Activated CD8-positive, alpha-beta T cell treated with anti-CD3 and anti-CD28 coated beads for 36 hours (primary cell): ENCODE measurements at regions of chr1 and their contacts with region 1.

Region 1: DNA sequence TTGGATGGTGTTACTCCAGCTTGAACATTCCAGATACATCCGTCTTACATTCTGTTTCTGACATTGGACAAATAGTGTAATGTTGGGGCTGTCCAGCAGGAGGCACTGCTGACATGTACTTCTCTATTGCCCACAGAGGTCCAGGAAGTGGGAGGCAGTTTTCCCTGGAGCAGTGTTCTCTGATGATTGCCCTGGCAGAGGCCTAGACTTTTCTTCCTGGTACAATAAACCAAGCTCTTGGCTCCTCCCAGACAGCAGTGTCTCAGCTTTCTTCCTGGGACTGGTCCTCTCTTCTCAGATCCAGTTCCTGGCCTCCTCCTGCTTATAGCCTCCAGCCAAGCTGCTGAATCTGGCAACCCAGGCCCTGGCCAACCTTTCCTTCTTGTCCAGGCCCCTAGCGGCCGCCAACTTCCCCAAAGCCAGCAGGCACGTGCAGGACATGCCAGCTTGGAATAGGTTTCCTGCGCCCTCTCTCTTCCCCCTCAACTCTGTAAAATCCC is 14.9 kb upstream of the IFNLR1 start:
- DNase-seq: peak; percentile 80
- ATAC-seq: peak; percentile 41
- H3K4me3 Mint-ChIP-seq: no peak overlapping the region
- H3K27ac Mint-ChIP-seq: no peak overlapping the region
- H3K4me1 Mint-ChIP-seq: peaks cover 14% of the 10 kb centered on the region
- H3K27me3 Mint-ChIP-seq: peaks cover 11% of the 10 kb centered on the region
- CTCF ChIP-seq: peak; percentile 97

Region 2: GRCh38 chr1:24150234-24151174 is 51.5 kb before region 1 on chr1:
- CTCF ChIA-PET with region 1: interaction called, 56 read pairs
- POLR2A ChIA-PET with region 1: interaction called, 3 read pairs
- intact Hi-C with region 1: no loop called
- DNase-seq: peak; percentile 95
- ATAC-seq: peak; percentile 97
- H3K4me3 Mint-ChIP-seq: peak overlapping the region; percentile 61
- H3K27ac Mint-ChIP-seq: no peak overlapping the region
- H3K4me1 Mint-ChIP-seq: peaks cover 18% of the 10 kb centered on the region
- H3K27me3 Mint-ChIP-seq: peaks cover 36% of the 10 kb centered on the region
- CTCF ChIP-seq: peak; percentile 95

Region 3: DNA sequence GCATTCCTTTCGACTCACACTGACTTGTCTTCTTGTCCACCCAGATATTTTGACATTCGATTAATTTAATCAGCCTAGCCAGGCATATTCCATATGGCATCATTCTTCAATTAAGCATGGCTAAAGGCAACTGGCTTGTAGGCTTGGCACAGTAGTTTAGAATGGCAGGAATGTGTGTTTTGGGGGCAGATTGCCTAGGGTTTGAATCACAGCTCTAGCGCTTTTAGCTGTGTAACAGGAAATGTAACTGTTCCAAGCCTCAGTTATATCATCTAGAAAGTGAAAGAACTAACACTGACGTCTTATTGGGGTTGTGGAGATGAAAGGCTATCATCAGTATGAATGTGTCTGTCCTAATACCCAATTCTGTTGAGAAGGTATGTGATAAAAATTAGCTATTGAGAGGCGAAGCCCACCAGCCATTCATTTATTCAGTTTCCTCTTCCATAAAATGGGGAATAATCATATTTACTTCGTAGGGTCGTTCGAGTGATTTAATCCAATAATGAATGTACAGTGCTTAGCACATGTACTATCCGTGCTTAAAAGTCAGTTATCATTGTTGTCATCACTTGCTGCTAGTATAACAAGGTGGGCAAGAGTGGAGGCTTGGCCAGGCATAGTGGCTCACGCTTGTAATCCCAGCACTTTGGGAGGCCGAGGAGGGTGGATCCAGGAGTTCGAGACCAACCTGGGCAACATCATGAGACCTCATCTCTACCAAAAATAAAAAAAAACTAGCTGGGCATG is 75.6 kb after region 1 on chr1:
- CTCF ChIA-PET with region 1: interaction called, 14 read pairs
- POLR2A ChIA-PET with region 1: no interaction called
- intact Hi-C with region 1: no loop called
- DNase-seq: peak; percentile 39
- ATAC-seq: peak; percentile 97
- H3K4me3 Mint-ChIP-seq: no peak overlapping the region
- H3K27ac Mint-ChIP-seq: no peak overlapping the region
- H3K4me1 Mint-ChIP-seq: peaks cover 9% of the 10 kb centered on the region
- H3K27me3 Mint-ChIP-seq: peaks cover 26% of the 10 kb centered on the region
- CTCF ChIP-seq: no peak

Region 4: DNA sequence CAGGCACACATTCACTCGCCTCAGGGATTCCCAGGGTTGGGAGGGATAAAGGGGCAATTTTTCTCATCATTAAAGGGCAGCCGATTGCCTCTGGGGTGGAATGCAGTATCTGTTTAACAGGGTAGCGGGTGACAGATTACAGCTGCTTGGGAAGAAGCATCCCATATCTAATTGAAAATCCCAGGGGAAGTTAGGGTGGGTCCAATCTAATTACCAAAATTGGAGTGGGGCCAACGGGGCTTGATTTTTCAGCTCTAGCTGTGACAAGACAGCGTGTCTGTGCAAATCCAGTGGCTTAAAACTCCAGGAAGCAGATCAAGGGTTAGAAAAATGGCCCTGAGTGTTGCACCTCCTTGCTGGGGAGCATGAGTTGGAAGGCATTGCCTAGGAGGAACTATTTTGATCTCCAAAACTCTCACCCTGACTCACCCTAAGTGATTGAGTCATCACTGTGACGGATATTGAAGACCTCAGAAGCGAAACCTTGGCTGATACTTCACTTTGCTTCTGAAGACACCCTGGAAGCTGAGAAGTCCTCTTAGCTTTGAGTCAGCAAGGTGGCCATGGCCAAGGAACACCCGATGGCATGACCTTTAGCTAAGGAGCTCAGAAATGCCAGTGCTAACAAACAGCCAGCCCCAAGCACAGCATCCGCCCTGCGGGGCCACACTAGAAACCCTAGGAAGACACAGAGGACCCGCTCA is 163.1 kb after region 1 on chr1:
- CTCF ChIA-PET with region 1: interaction called, 10 read pairs
- POLR2A ChIA-PET with region 1: no interaction called
- intact Hi-C with region 1: no loop called
- DNase-seq: peak; percentile 60
- ATAC-seq: peak; percentile 98
- H3K4me3 Mint-ChIP-seq: no peak overlapping the region
- H3K27ac Mint-ChIP-seq: peak overlapping the region; percentile 22
- H3K4me1 Mint-ChIP-seq: peaks cover 14% of the 10 kb centered on the region
- H3K27me3 Mint-ChIP-seq: no peaks in the 10 kb centered on the region
- CTCF ChIP-seq: no peak

Region 5: DNA sequence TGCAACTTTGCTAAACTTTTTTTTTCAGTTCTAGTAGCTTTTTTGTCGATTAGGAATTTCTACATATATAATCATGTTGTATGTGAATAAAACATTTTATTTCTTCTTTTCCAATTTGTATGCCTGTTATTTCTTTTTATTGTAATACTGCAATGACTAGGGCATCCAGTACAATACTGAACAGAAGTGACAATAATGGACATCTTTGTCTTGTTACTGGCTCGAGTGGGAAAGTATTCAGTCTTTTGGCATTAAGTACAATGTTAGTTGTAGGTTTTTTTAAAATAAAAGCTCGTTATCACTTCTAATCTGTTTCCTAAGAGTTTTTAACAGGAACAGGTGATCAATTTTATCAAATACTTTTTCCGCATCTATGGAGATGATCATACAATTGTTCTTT is 201.8 kb after region 1 on chr1:
- CTCF ChIA-PET with region 1: interaction called, 13 read pairs
- POLR2A ChIA-PET with region 1: interaction called, 3 read pairs
- intact Hi-C with region 1: no loop called
- DNase-seq: no peak
- ATAC-seq: no peak
- H3K4me3 Mint-ChIP-seq: no peak overlapping the region
- H3K27ac Mint-ChIP-seq: no peak overlapping the region
- H3K4me1 Mint-ChIP-seq: peaks cover 8% of the 10 kb centered on the region
- H3K27me3 Mint-ChIP-seq: no peaks in the 10 kb centered on the region
- CTCF ChIP-seq: no peak

Region 6: GRCh38 chr1:24586970-24587820 is 385.2 kb after region 1 on chr1:
- CTCF ChIA-PET with region 1: interaction called, 21 read pairs
- POLR2A ChIA-PET with region 1: no interaction called
- intact Hi-C with region 1: no loop called
- DNase-seq: peak; percentile 70
- ATAC-seq: peak; percentile 98
- H3K4me3 Mint-ChIP-seq: no peak overlapping the region
- H3K27ac Mint-ChIP-seq: peak overlapping the region; percentile 78
- H3K4me1 Mint-ChIP-seq: peaks cover 8% of the 10 kb centered on the region
- H3K27me3 Mint-ChIP-seq: no peaks in the 10 kb centered on the region
- CTCF ChIP-seq: peak; percentile 71